Breast epithelium (tissue), 4 donors: ENCODE measurements at regions of chr12 and their contacts with region 1.

Region 1: DNA sequence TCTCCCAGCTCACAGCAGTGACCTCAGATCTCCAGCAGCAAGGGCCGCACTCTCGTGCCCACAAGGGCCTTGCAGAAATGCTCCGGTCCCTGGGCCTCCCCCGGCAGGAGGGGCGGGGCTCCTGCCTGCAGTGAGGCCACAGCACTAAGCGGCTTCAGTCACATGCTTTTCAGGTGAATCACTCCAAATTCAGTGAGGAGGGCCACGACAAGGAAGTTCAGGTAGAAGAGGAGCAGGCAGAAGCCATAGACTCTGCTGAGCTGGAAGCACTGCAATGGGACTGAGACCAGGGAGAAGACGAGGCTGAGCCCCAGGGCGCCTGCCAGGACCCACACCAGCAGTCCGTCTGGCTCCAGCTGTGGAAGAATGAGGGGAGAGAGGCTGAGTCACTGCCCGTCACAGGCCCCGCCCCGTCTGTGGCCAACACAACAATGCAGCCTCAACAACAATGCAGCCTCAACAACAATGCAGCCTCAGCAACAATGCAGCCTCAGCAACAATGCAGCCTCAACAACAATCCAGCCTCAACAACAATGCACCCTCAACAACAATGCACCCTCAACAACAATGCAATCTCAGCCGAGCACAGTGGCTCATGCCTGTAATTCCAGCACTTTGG is 35.2 kb downstream of the SLC8B1 start:
- DNase-seq: peak; percentile 66 to 72
- H3K4me3 ChIP-seq: no peak overlapping the region
- H3K27ac ChIP-seq: peak overlapping the region; percentile 59 to 87
- H3K4me1 ChIP-seq: peaks cover 7 to 10% of the 10 kb centered on the region in 2 donors
- H3K27me3 ChIP-seq: no peaks in the 10 kb centered on the region
- CTCF ChIP-seq: no peak
- POLR2A ChIP-seq: no peak

Region 2: GRCh38 chr12:113267621-113268395 is 31.9 kb before region 1 on chr12:
- intact Hi-C with region 1: loop called (anchors 1 kb)
- DNase-seq: no peak
- H3K4me3 ChIP-seq: no peak overlapping the region
- H3K27ac ChIP-seq: no peak overlapping the region
- H3K4me1 ChIP-seq: peaks cover 0 to 11% of the 10 kb centered on the region in 2 donors
- H3K27me3 ChIP-seq: no peaks in the 10 kb centered on the region
- CTCF ChIP-seq: no peak
- POLR2A ChIP-seq: no peak

Region 3: GRCh38 chr12:113889076-113889475 is 589.3 kb after region 1 on chr12:
- intact Hi-C with region 1: no loop called
- DNase-seq: peak in 1 of 2 donors; percentile 50
- H3K4me3 ChIP-seq: no peak overlapping the region
- H3K27ac ChIP-seq: no peak overlapping the region
- H3K4me1 ChIP-seq: peaks cover 0 to 9% of the 10 kb centered on the region in 2 donors
- H3K27me3 ChIP-seq: no peaks in the 10 kb centered on the region
- CTCF ChIP-seq: peak in 1 of 3 donors; percentile 40
- POLR2A ChIP-seq: no peak

Region 4: GRCh38 chr12:113955109-113955970 is 655.6 kb after region 1 on chr12:
- intact Hi-C with region 1: loop called (anchors 10 kb)
- DNase-seq: no peak
- H3K4me3 ChIP-seq: no peak overlapping the region
- H3K27ac ChIP-seq: no peak overlapping the region
- H3K4me1 ChIP-seq: no peaks in the 10 kb centered on the region
- H3K27me3 ChIP-seq: no peaks in the 10 kb centered on the region
- CTCF ChIP-seq: no peak
- POLR2A ChIP-seq: no peak